Activated CD4-positive, alpha-beta T cell treated with anti-CD3 and anti-CD28 coated beads for 36 hours (primary cell): ENCODE measurements at regions of chr16 and their contacts with region 1.

Region 1: DNA sequence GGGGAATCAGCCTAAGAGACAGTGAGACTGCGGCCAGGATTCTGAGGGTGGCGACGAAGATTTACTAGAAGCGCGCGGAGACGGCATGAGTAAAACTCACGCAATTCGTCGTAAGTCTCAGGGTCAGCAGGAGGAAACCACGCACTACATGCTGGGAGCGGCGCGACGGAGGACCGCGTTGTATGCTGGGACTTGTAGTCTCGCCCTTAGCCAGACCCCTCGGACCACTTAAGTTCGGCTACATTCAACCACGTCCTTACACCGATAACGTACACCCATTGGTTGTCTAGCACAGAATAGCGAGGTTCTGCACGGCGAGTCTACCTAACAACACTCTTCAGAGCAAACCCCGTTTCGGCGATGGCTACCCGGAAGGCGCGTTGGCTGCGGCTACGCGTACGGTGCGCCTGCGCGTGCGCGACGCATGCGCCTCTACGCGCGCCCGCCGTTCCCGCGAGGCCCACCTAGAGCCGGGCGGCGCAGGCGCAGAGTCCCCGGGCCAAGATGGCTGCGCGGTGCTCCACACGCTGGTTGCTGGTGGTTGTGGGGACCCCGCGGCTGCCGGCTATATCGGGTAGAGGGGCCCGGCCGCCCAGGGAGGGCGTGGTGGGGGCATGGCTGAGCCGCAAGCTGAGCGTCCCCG is at the start of gene DNAJA3:
- DNase-seq: peak; percentile 96
- ATAC-seq: peak; percentile 93
- H3K4me3 Mint-ChIP-seq: peak within 1 kb of the TSS; percentile 95
- H3K27ac Mint-ChIP-seq: peak within 1 kb of the TSS; percentile 98
- H3K4me1 Mint-ChIP-seq: peaks cover 27% of the 10 kb centered on the region
- H3K27me3 Mint-ChIP-seq: no peaks in the 10 kb centered on the region
- total RNA-seq, gene DNAJA3: 93.9 to 102 TPM

Region 2: DNA sequence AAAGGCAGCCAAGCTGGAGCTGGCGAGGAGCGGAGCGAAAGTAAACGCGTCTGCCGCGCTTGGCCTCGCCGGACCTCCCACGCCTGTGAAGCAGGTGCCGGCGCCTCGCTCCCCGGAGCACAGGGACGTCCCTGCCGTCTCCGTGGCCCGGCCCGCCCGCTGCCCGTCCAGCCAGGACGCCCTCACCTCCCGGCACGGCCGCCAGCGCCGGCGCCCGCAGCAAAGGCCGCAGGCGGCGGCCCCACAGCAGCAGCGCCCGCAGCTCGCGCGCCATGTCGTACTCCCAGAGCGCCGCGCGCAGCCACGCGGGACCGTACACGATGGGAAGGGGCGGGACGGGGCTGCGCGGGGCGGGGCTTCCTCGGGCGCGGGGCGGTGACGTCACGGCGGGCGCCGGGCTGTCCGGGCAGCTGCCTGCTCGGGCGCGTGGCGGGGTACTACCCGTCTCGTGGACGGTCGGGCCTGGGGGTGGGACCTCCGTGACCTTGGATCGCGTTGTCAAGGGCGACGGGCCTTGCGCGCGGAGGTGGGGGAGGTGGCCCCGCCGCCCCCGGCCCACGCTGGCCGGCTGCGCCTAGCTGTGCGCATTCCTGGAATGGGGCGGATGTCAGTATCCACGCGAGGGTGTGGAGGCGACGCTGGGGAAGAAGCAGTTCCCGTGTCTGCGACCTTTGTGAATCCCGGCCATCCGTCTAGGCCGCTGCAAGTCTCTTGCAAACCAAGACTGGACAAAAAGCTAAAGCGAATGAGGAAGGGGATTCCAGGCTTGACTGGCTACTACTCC is 708.1 kb before region 1 on chr16 and contains the start of gene TRAP1:
- CTCF ChIA-PET with region 1: no interaction called
- POLR2A ChIA-PET with region 1: no interaction called
- intact Hi-C with region 1: loop called in 1 of 2 experiments (anchors 2 kb)
- DNase-seq: peak; percentile 95
- ATAC-seq: peak; percentile 95
- H3K4me3 Mint-ChIP-seq: peak within 1 kb of the TSS; percentile 89
- H3K27ac Mint-ChIP-seq: peak within 1 kb of the TSS; percentile 92
- H3K4me1 Mint-ChIP-seq: peaks cover 44% of the 10 kb centered on the region
- H3K27me3 Mint-ChIP-seq: no peaks in the 10 kb centered on the region
- total RNA-seq, gene TRAP1: 306 to 360 TPM

Region 3: GRCh38 chr16:4402439-4403132 is 22.9 kb before region 1 on chr16:
- CTCF ChIA-PET with region 1: interaction called, 3 read pairs
- POLR2A ChIA-PET with region 1: no interaction called
- intact Hi-C with region 1: loop called in 1 of 2 experiments (anchors 1 kb)
- DNase-seq: peak; percentile 84
- ATAC-seq: peak; percentile 82
- H3K4me3 Mint-ChIP-seq: no peak overlapping the region
- H3K27ac Mint-ChIP-seq: no peak overlapping the region
- H3K4me1 Mint-ChIP-seq: no peaks in the 10 kb centered on the region
- H3K27me3 Mint-ChIP-seq: no peaks in the 10 kb centered on the region

Region 4: DNA sequence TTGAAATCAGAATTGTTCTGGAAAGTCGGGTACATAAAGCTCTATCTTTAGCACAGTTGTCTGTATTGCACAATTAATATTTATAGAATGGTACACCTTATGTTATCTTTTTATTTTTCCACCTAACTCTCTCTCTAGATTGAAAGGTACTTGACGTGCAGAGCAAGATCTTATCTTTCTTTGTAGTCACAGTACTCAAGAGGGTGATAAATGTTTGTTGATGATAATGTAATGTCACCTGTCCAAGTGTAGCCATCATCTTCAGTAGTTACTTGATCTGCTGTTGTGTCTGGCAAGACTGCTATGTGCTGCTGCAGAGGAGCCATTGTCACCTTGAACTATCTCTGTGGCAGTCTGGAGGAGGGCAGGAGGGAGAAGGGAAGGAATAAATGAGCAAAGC is 56.0 kb after region 1 on chr16:
- CTCF ChIA-PET with region 1: no interaction called
- POLR2A ChIA-PET with region 1: interaction called, 12 read pairs
- intact Hi-C with region 1: loop called in 1 of 2 experiments (anchors 1 kb)
- DNase-seq: no peak
- ATAC-seq: no peak
- H3K4me3 Mint-ChIP-seq: no peak overlapping the region
- H3K27ac Mint-ChIP-seq: peak overlapping the region; percentile 63
- H3K4me1 Mint-ChIP-seq: peaks cover 48% of the 10 kb centered on the region
- H3K27me3 Mint-ChIP-seq: no peaks in the 10 kb centered on the region

Region 5: DNA sequence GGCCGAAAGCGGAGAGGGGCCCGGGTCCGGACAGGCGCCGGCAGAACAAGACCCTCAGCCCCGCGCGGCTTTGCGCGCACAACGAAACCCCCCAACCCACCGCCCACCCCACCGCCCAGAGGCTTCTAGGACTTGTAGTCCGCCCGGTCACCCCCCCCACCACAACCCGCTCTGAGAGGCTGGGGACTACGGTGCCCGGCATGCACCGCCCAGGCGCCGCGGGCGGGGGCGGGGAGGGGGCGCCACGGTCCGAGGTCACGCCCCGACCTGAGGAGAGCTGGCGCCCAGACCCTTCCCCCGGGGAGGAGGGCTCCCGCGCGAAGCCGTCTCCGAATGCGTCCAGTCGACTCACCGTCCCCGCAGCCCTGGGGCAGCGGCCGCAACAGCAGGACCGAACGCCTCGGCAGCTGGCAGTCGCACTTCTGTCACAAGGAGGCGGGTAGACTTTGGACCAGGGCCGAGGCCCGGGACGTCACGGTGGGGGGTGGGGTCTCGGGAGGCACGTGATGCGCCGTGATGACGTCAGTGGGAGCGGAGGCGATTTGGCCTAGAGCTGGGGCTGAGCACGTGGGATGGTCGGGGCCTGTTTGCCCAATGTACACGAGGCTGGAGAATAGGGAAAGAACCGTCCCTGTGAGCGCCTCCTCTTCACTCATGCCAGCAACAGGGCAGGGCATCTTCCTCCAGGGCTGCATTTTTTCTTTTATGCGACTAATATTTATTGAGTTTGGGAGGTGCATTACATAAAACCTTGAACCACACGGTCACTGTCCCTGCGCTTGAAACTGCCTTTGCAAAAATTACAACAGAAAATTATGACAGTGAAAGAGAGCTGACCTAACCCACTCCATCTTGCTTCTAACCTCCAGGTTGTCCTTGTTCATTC is 113.1 kb after region 1 on chr16 and contains the start of gene CDIP1:
- CTCF ChIA-PET with region 1: no interaction called
- POLR2A ChIA-PET with region 1: no interaction called
- intact Hi-C with region 1: loop called (anchors 1 to 5 kb)
- DNase-seq: peak; percentile 99
- ATAC-seq: peak; percentile 81
- H3K4me3 Mint-ChIP-seq: peak within 1 kb of the TSS; percentile 75
- H3K27ac Mint-ChIP-seq: peak within 1 kb of the TSS; percentile 63
- H3K4me1 Mint-ChIP-seq: peaks cover 41% of the 10 kb centered on the region
- H3K27me3 Mint-ChIP-seq: no peaks in the 10 kb centered on the region
- total RNA-seq, gene CDIP1: 28.3 to 30.2 TPM

Region 6: DNA sequence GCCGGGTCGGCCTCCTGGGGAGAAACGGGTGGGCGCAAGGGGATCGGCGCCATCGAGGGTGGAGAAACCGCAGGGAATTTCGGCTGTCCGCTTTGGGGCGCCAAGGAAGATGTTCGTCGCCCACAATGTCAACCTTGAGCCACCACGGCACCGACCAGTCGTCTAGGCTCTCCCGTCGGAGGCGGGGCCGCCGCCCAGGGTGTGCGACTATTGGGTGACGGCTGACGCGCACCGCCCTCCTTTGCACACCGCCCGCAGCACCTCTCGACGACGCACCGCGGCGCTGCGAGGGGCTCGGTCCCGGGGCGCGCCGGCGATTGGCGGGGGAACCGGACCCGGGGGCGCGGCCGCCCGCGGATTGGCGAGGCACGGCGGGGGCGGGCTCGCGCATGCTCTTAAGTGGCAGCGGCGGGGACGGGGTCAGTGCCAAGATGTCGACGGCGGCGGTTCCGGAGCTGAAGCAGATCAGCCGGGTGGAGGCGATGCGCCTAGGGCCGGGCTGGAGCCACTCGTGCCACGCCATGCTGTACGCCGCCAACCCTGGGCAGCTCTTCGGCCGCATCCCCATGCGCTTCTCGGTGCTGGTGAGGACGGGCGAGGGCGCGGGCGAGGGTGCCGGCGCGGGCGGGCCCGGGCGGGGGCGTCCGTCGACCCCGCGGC is 267.9 kb after region 1 on chr16 and contains the start of gene NUDT16L1:
- CTCF ChIA-PET with region 1: no interaction called
- POLR2A ChIA-PET with region 1: no interaction called
- intact Hi-C with region 1: loop called in 1 of 2 experiments (anchors 5 kb)
- DNase-seq: peak; percentile 98
- ATAC-seq: peak; percentile 95
- H3K4me3 Mint-ChIP-seq: peak within 1 kb of the TSS; percentile 77
- H3K27ac Mint-ChIP-seq: peak within 1 kb of the TSS; percentile 83
- H3K4me1 Mint-ChIP-seq: peaks cover 17% of the 10 kb centered on the region
- H3K27me3 Mint-ChIP-seq: no peaks in the 10 kb centered on the region
- total RNA-seq, gene NUDT16L1: 16.4 to 22.5 TPM

Region 7: GRCh38 chr16:4766874-4767628 is 341.6 kb after region 1 on chr16 and contains the start of gene ZNF500:
- CTCF ChIA-PET with region 1: no interaction called
- POLR2A ChIA-PET with region 1: no interaction called
- intact Hi-C with region 1: loop called in 1 of 2 experiments (anchors 2 kb)
- DNase-seq: peak; percentile 97
- ATAC-seq: peak; percentile 78
- H3K4me3 Mint-ChIP-seq: peak within 1 kb of the TSS; percentile 89
- H3K27ac Mint-ChIP-seq: peak within 1 kb of the TSS; percentile 91
- H3K4me1 Mint-ChIP-seq: peaks cover 25% of the 10 kb centered on the region
- H3K27me3 Mint-ChIP-seq: no peaks in the 10 kb centered on the region
- total RNA-seq, gene ZNF500: 10.3 to 11.6 TPM